RWPE1 (cell line): ENCODE measurements at regions of chr2 and their contacts with region 1.

Region 1: DNA sequence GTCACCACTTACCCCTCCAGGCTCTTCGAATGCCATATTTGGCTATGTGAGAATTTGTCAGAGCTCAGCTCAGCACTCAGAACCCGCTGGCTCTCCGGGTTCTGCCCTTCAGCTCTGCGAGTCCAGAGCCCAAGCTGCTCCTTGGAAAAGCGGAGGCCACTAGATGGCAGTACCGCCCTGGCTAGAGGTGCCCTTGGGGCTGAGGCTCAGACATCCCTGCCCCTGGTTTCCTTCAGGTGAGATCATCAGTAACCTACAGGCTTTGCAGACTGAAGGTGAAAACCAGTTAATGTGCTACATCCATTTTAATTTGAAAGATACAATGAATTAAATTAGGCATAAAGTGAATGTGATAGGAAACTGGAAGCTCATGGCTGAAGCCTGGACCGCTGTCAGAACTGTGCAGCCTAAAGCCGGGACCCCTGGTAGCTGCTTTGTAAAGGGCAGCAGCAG is 285.6 kb downstream of the AGAP1 start:
- DNase-seq: peak; percentile 85
- H3K27ac ChIP-seq: no peak overlapping the region
- CTCF ChIP-seq: peak; percentile 87

Region 2: DNA sequence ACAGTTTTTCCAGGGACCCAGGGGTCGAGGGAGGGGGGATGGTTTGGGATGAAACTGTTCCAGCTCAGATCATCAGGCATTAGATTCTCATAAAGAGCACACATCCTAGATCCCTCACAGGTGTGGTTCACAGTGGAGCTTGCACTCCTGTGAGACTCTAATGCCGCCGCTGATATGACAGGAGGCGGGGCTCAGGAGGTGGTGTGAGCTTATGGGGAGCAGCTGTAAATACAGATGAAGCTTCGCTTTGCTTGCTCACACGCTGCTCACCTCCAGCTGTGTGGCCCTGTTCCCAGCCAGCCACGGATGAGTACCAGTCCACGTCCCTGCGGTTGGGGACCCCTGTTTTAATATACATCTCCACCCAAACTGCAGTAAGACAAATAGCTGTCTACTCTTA is 81.4 kb before region 1 on chr2:
- CTCF ChIA-PET with region 1: no interaction called
- POLR2A ChIA-PET with region 1: no interaction called
- DNase-seq: no peak
- H3K27ac ChIP-seq: no peak overlapping the region
- CTCF ChIP-seq: no peak

Region 3: DNA sequence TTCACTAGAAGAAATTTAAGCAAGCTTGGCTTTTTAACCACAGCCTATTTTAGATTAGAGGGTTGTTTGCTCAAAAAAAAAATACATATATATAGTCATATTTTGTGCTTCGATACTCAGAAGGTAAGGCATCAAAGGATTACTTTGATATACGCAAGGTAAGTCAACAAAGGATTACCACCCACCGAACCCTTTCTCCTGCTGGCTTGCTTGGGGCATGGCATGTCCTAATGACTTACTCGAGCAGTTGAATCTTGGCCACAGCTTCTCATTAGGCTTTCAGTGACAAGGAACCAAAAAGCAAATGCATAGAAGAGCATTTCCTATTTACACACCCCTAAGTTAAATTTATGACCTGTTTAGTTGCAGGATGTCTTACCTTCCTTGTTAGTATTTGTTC is 10.1 kb after region 1 on chr2:
- CTCF ChIA-PET with region 1: interaction called, 24 read pairs
- POLR2A ChIA-PET with region 1: no interaction called
- DNase-seq: no peak
- H3K27ac ChIP-seq: no peak overlapping the region
- CTCF ChIP-seq: no peak

Region 4: DNA sequence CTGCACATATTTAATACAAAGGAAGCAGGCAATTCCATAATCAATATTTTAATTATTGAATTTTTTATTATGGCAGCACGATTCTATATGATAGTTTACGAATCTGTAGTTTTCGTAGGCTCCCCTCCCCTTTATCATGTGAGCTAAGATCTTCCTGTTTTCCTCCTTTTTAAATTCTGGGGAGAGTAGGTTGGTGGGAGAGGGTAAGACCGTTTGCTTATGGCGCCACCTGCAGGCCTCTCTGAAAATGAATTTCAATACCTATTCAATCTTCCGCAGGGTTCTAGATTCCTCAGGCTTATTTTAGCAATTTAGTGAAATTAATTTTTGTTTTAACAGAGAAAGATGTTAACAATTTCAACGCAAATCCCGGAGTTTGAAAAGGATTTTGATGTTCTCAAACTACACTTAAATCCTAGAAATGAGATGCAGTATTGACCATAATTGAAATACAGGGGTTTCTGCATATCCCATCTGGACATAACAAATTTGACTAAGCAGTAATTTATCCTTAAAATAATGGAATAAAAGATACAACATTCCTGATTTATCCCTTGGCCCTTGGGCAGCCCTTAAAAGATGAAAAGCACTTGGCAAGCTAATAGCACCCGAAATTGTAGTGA is 401.5 kb after region 1 on chr2:
- CTCF ChIA-PET with region 1: interaction called, 47 read pairs
- POLR2A ChIA-PET with region 1: no interaction called
- DNase-seq: peak; percentile 75
- H3K27ac ChIP-seq: no peak overlapping the region
- CTCF ChIP-seq: peak; percentile 79

Region 5: GRCh38 chr2:236215196-236216046 is 436.0 kb after region 1 on chr2:
- CTCF ChIA-PET with region 1: no interaction called
- POLR2A ChIA-PET with region 1: no interaction called
- DNase-seq: peak; percentile 20
- H3K27ac ChIP-seq: no peak overlapping the region
- CTCF ChIP-seq: no peak